ENCODE measurements at regions of chr10 and their contacts with region 1.

Region 1: DNA sequence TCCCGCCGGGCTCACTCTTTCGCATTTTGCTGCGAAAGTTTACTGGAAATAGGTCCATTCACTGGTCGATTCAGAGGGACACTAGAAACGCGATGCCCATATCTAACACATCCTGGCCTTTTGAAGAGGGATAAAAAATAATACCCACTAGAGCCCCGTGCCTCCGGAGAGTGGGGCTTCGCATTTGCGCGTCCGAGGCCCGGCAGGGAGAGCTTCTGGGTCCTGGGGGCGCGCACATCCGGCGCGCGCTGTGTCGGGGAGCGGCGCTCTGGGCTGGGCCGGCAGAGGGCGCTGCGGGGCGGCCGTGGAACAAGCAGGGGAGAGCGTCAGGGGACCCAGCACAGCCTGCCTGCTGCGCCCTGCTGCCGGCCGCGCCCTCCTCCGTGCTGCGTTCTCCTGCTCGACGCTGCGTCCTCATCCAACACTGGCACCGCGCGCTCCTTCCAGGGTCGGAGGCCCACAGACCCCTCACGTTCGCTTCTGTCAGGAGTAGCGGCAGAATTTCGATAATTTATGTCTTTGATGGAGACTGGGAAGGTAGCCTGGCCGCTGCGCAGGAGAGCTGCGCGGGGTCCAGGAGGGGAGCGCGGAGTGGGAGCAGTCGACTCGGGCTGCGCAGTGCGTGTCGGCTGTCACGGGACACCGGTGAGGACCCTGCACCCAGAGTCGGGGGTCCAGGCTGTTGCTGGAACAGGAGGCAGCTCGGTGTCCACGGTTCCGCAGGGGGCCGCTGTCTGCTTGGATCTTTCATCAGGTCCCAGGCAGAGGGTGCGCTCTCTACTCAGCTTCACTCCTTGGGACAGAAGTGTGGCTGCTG is 41.5 kb upstream of the ZNF32 start:
- DNase-seq: peak; percentile 88
- H3K4me3 Mint-ChIP-seq: peak overlapping the region; percentile 80
- H3K27ac Mint-ChIP-seq: no peak overlapping the region
- H3K4me1 Mint-ChIP-seq: peaks cover 9% of the 10 kb centered on the region
- H3K27me3 Mint-ChIP-seq: peaks cover 56% of the 10 kb centered on the region

Region 2: DNA sequence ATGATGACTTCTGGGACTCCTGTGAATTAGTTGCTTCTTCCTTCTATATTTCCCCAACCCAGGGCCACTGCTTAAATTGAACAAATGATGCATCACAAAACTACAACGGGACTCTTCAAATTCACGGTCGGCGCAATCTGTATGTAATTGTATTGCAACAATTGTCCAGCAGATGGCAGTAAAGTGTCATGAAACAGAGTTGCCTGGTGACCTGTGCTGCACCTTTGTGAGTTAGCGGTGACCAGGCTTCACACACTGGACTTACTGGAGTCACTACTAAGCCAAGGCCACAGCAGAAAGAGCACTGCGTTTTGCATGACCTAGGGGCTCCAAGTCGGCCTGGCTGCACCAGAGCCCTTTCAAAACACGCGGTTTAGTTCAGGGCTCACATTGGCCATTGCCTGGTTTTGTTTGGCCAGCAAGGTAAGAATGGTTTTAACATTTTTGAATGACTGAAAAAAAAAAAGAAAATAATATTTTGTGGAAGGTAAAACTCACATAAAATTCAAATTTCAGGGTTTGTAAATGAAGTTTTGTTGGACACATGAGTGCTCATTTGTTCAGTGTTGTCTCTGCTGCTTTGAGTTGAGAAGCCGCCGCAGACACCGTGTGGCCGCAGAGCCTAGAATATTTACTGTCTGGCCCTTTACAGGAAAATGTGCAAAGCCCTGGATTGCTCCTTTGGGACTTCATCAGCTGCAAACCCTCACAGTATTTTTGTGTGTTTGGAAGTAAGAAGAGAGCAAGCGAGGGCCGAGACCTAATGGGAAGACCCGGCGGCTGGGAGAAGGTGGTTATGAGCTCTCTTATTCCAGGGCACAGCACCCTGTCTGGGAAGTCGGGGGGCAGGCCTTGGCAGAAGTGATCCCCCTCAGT is 18.3 kb before region 1 on chr10:
- CTCF ChIA-PET with region 1: interaction called, 19 read pairs
- DNase-seq: peak; percentile 59
- H3K4me3 Mint-ChIP-seq: no peak overlapping the region
- H3K27ac Mint-ChIP-seq: no peak overlapping the region
- H3K4me1 Mint-ChIP-seq: peaks cover 2% of the 10 kb centered on the region
- H3K27me3 Mint-ChIP-seq: peaks cover 66% of the 10 kb centered on the region

Region 3: GRCh38 chr10:44030143-44030542 is 340.0 kb after region 1 on chr10:
- CTCF ChIA-PET with region 1: interaction called, 30 read pairs
- DNase-seq: peak; percentile 52
- H3K4me3 Mint-ChIP-seq: no peak overlapping the region
- H3K27ac Mint-ChIP-seq: no peak overlapping the region
- H3K4me1 Mint-ChIP-seq: peaks cover 2% of the 10 kb centered on the region
- H3K27me3 Mint-ChIP-seq: peaks cover 17% of the 10 kb centered on the region

Region 4: GRCh38 chr10:44310762-44311562 is 620.8 kb after region 1 on chr10:
- CTCF ChIA-PET with region 1: interaction called, 12 read pairs
- DNase-seq: peak; percentile 70
- H3K4me3 Mint-ChIP-seq: no peak overlapping the region
- H3K27ac Mint-ChIP-seq: no peak overlapping the region
- H3K4me1 Mint-ChIP-seq: peaks cover 7% of the 10 kb centered on the region
- H3K27me3 Mint-ChIP-seq: peaks cover 13% of the 10 kb centered on the region

Measured in activated naive CD4-positive, alpha-beta T cell treated with anti-CD3 and anti-CD28 coated beads, Interleukin-2, amount 10 ng/mL, durations not matched to agents 7 days and 5 days (primary cell).